Cardiac septum (tissue), 1 donor: ENCODE measurements at regions of chrX and their contacts with region 1.

Region 1: GRCh38 chrX:110146521-110146920 is 143.6 kb downstream of the TMEM164 start:
- DNase-seq: no peak

Region 2: DNA sequence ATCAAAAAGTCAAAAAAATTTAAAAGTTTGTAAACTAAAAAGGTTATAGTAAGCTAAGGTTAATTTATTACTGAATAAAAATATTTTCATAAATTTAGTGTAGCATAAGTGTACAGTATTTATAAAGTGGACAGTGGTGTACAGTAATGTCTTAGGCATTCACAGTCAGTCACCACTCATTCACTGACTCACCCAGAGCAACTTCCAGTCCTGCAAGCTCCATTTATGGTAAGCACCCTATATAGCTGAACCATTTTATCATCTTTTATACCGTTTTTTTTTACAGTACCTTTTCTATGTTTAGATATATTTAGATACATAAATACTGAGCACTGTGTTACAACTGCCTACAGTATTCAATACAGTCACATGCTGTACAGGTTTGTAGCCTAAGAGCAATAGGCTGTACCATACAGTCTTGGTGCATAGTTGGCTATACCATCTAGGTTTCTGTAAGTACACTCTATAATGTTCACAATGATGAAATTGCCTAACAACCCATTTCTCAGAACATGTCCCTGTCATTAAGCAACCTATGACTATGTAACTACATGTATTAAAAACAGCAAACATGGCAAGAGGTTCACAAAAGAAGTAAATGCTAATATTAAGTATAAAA is 432.1 kb before region 1 on chrX:
- intact Hi-C with region 1: loop called (anchors 10 kb)
- DNase-seq: no peak

Region 3: DNA sequence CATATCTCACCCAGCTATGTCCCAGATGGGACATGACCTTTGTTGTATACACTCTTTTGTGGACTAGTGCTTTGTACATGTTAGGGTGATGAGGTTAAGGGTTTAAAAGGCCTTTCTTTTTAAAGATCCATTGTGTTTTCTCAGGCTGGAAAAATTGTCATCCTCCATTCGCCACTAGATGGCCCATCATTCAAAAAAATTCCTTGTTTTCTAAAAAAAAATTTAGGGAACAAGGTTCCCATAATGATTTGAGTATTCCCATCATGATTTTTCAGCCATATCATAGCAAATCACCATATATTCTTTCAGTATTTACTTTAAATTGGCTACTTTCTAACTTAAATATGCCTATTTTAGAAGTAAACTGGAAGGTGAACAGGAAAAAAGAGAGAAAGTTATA is 235.5 kb before region 1 on chrX:
- intact Hi-C with region 1: loop called (anchors 2 kb)
- DNase-seq: no peak

Region 4: GRCh38 chrX:110002300-110003166 is 144.0 kb before region 1 on chrX and contains the start of gene TMEM164:
- intact Hi-C with region 1: loop called (anchors 10 kb)
- DNase-seq: peak; percentile 95
- total RNA-seq, gene TMEM164: 39.9 TPM

Region 5: DNA sequence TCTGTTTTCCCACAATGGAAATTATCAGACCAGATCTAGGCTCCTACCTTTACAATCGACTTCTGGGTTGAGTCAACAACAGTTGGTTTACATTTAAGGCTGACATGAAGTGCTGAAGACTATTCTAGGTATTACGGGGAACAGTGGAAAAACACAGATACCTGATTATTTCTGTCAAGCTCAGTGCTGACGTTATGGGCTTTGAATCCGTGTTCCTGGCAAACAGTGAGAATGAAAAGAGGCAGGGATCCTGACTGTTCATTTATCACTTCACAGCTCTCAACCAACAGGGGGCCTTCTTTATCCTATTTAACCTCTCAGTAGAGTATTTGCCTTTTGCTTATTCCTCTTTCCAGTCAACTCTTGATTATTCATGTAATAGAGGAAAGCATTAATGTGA is 100.5 kb before region 1 on chrX:
- intact Hi-C with region 1: loop called (anchors 10 kb)
- DNase-seq: no peak